IMR-90 (cell line): ENCODE measurements at regions of chr5 and their contacts with region 1.

Region 1: GRCh38 chr5:127030259-127031146 is at the start of gene MARCHF3:
- DNase-seq: peak; percentile 96
- ATAC-seq: peak; percentile 98
- H3K4me3 ChIP-seq: peak within 1 kb of the TSS; percentile 83
- H3K27ac ChIP-seq: peak within 1 kb of the TSS; percentile 67
- H3K4me1 ChIP-seq: peaks cover 5% of the 10 kb centered on the region
- H3K27me3 ChIP-seq: no peaks in the 10 kb centered on the region
- CTCF ChIP-seq: peak; percentile 40
- POLR2A ChIP-seq: peak; percentile 95
- RAD21 ChIP-seq: peak; percentile 33; the same call in 1 of the 2 replicates
- total RNA-seq, gene MARCHF3: 17.8 and 18.8 TPM in 2 replicates

Region 2: DNA sequence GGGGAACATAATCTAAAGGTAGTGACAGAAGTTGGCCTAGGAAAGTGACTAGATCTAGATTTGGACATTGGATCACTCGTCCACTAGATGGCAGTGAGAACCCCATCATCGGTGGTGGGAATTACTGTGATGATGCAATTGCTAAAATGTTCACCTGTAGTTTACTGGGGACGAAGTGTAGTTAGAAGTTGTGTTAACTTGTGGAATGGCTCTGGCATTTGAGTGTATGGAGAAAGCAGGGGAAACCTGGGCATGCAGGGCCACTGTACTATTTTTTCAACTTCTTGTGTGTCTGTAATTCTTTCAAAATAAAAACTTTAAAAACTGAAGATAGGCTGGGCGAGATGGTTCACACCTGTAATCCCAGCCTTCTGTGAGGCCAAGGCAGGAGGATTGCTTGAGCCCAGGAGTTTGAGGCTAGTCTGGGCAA is 354.3 kb before region 1 on chr5:
- CTCF ChIA-PET with region 1: no interaction called
- POLR2A ChIA-PET with region 1: no interaction called
- dilution Hi-C with region 1: no loop called
- in situ Hi-C with region 1: no loop called
- intact Hi-C with region 1: no loop called
- DNase-seq: peak; percentile 60
- ATAC-seq: peak; percentile 78
- H3K4me3 ChIP-seq: no peak overlapping the region
- H3K27ac ChIP-seq: no peak overlapping the region
- H3K4me1 ChIP-seq: no peaks in the 10 kb centered on the region
- H3K27me3 ChIP-seq: no peaks in the 10 kb centered on the region; the same call in 1 of the 2 replicates
- CTCF ChIP-seq: peak; percentile 86
- POLR2A ChIP-seq: no peak
- RAD21 ChIP-seq: peak; percentile 82

Region 3: GRCh38 chr5:126846344-126846743 is 184.2 kb before region 1 on chr5:
- CTCF ChIA-PET with region 1: no interaction called
- POLR2A ChIA-PET with region 1: no interaction called
- dilution Hi-C with region 1: no loop called
- in situ Hi-C with region 1: no loop called
- intact Hi-C with region 1: loop called (anchors 5 kb)
- DNase-seq: peak; percentile 38
- ATAC-seq: peak; percentile 44; the same call in 1 of the 2 replicates
- H3K4me3 ChIP-seq: no peak overlapping the region
- H3K27ac ChIP-seq: no peak overlapping the region
- H3K4me1 ChIP-seq: no peaks in the 10 kb centered on the region; the same call in 1 of the 2 replicates
- H3K27me3 ChIP-seq: no peaks in the 10 kb centered on the region
- CTCF ChIP-seq: peak; percentile 42
- POLR2A ChIP-seq: no peak
- RAD21 ChIP-seq: peak; percentile 56

Region 4: GRCh38 chr5:127011961-127012644 is 18.4 kb before region 1 on chr5:
- CTCF ChIA-PET with region 1: interaction called, 3 read pairs
- POLR2A ChIA-PET with region 1: no interaction called
- dilution Hi-C with region 1: no loop called
- in situ Hi-C with region 1: no loop called
- intact Hi-C with region 1: loop called (anchors 1 kb)
- DNase-seq: peak; percentile 20
- ATAC-seq: no peak
- H3K4me3 ChIP-seq: no peak overlapping the region
- H3K27ac ChIP-seq: no peak overlapping the region
- H3K4me1 ChIP-seq: peaks cover 4% of the 10 kb centered on the region; the same call in 1 of the 2 replicates
- H3K27me3 ChIP-seq: no peaks in the 10 kb centered on the region
- CTCF ChIP-seq: no peak
- POLR2A ChIP-seq: no peak
- RAD21 ChIP-seq: no peak